Mammary epithelial cell (primary cell): ENCODE measurements at regions of chr10 and their contacts with region 1.

Region 1: GRCh38 chr10:77111611-77112550 is 525.7 kb downstream of the KCNMA1 start:
- DNase-seq: peak; percentile 66
- H3K4me3 ChIP-seq: no peak overlapping the region
- H3K27ac ChIP-seq: no peak overlapping the region
- H3K4me1 ChIP-seq: peaks cover 9% of the 10 kb centered on the region
- H3K27me3 ChIP-seq: no peaks in the 10 kb centered on the region
- CTCF ChIP-seq: peak; percentile 76 to 77

Region 2: DNA sequence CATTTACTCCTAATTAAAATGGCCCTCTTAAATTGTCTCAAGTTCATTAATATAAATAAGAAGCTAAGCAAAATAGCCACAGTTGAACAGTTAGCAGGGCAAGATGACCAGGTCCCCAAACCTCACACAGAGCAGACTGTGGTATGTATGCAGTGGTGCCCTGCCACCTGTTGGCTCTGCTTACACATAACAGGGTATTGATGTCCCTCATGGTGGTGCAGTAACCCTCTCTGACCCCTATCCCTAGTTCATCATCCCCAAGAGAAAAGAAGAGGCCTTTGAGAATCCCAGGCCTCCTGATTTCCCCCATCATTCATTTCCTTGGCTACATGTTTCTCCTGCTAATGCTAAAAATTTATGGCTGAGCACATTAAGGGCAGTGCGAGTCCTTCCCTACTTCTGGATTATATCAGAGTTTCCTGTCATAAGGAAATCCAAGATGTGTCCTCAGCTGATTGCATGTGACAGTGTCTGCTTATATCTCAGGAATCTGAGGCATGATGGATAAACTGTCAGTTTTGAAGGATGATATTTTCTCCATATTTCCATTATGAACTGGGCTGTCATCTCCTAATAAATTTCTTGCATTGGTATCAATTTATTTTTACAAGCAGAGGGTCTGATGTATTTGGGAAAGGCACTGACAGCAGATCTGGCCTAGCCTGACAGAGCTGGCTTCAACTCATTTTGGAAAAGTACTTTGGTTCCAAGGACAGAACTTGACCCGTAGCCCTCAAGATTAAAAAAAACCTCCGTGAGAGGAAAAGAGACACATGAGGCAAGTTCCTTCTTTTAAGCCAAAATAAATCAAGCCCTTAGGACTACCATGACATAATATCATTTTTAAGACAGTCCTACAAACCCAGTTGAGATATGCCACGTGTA is 799.9 kb before region 1 on chr10:
- CTCF ChIA-PET with region 1: no interaction called
- dilution Hi-C with region 1: no loop called
- in situ Hi-C with region 1: no loop called
- intact Hi-C with region 1: loop called (anchors 5 kb)
- DNase-seq: peak; percentile 16
- H3K4me3 ChIP-seq: no peak overlapping the region
- H3K27ac ChIP-seq: no peak overlapping the region
- H3K4me1 ChIP-seq: no peaks in the 10 kb centered on the region
- H3K27me3 ChIP-seq: no peaks in the 10 kb centered on the region
- CTCF ChIP-seq: peak; percentile 66 to 69

Region 3: GRCh38 chr10:76632777-76633071 is 479.2 kb before region 1 on chr10:
- CTCF ChIA-PET with region 1: no interaction called
- dilution Hi-C with region 1: no loop called
- in situ Hi-C with region 1: no loop called
- intact Hi-C with region 1: loop called (anchors 1 kb)
- DNase-seq: peak; percentile 35
- H3K4me3 ChIP-seq: no peak overlapping the region
- H3K27ac ChIP-seq: no peak overlapping the region
- H3K4me1 ChIP-seq: no peaks in the 10 kb centered on the region
- H3K27me3 ChIP-seq: no peaks in the 10 kb centered on the region
- CTCF ChIP-seq: peak; percentile 66 to 75

Region 4: DNA sequence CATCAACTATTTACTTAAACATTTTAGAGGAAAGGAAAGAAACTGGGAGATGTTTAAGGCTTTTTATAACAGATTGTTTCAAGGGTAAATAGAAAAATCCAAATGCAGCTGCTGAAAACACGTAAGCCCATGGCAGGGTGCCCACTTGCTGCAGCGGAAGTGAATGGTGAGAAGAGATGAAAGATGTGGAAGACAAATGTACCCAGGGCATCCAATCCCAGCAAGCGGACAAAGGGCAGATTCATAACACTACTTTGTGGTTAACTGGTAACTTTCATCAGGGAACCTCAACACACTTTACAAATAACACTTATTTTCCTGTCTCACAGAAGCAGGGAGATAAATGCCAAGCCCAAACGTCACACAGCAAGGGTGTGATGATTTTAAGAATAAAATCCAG is 167.3 kb after region 1 on chr10:
- CTCF ChIA-PET with region 1: no interaction called
- dilution Hi-C with region 1: no loop called
- in situ Hi-C with region 1: no loop called
- intact Hi-C with region 1: no loop called
- DNase-seq: peak; percentile 43
- H3K4me3 ChIP-seq: no peak overlapping the region
- H3K27ac ChIP-seq: no peak overlapping the region
- H3K4me1 ChIP-seq: peaks cover 14% of the 10 kb centered on the region
- H3K27me3 ChIP-seq: no peaks in the 10 kb centered on the region
- CTCF ChIP-seq: no peak